ENCODE measurements at regions of chr3 and their contacts with region 1.

Region 1: DNA sequence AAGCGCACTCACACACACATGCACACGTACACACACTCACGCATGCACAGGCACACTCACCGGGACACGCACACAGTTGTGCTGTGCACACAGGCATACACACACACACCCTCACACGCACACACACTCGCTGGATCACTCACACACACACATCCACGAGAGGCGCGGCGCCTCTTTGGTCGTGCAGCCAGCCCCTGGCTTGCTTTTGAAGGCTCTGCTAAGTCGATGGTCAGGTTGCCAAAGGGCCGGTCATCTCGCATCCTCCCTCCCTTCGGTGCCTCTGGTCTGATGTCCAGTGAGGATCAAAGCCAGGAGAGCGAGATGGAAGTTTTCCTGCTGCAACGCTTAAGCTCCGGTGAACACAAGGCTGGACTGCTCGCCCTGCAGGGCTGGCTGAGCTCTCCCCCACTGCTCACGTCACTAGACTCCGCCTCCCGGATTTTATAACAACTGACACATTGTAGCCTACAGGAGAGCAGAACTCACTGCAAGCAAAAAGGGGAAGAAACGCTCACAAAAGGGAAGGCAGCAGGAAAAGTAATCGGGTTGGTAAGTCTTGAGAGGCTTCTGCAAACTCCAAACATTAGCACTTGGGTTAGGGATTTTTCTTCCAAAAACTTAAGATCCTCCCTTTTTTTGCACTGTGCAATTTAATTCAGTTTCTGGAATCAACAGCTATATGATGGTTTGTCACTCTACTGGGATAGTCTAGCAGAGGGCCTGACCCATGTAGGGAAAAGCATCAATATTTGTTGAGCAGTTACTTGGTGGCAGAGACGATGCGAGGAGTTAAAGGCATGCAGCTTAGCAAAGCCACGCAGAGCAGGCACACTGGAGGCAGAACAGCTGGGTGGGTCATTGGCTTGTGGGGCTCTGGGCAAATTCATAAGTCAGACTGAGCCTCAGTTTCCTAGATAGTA is at the start of gene SRGAP3:
- DNase-seq: peak; percentile 92
- H3K4me3 ChIP-seq: peak within 1 kb of the TSS; percentile 58 to 94 (median 89)
- H3K27ac ChIP-seq: peak within 1 kb of the TSS; percentile 84
- H3K4me1 ChIP-seq: peaks cover 55% of the 10 kb centered on the region
- H3K27me3 ChIP-seq: no peaks in the 10 kb centered on the region
- CTCF ChIP-seq: peak; percentile 22 to 47
- total RNA-seq, gene SRGAP3: 27.2 to 50.1 TPM

Region 2: DNA sequence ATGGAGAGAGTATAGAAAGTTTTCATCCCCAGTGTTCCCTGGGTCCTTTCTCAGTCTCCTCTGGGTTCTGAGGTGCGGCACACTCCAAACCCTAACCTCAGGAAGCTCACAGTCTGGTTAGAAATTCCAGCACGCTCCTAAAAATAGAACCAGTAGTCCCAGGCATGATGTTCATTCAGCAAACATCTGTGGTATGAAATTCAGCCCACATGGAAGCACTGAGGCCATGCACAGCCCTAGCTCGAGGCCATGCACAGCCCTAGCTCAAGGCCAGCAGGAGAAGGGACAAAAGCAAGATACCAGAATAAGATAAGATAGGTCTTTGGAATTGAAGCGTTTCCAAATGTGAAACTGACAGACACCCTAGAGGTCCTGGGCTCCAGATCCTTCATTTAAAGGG is 397.8 kb before region 1 on chr3:
- CTCF ChIA-PET with region 1: no interaction called
- dilution Hi-C with region 1: no loop called
- in situ Hi-C with region 1: no loop called
- intact Hi-C with region 1: no loop called
- DNase-seq: peak; percentile 61
- H3K4me3 ChIP-seq: no peak overlapping the region
- H3K27ac ChIP-seq: no peak overlapping the region
- H3K4me1 ChIP-seq: peaks cover 19% of the 10 kb centered on the region
- H3K27me3 ChIP-seq: no peaks in the 10 kb centered on the region
- CTCF ChIP-seq: no peak

Region 3: DNA sequence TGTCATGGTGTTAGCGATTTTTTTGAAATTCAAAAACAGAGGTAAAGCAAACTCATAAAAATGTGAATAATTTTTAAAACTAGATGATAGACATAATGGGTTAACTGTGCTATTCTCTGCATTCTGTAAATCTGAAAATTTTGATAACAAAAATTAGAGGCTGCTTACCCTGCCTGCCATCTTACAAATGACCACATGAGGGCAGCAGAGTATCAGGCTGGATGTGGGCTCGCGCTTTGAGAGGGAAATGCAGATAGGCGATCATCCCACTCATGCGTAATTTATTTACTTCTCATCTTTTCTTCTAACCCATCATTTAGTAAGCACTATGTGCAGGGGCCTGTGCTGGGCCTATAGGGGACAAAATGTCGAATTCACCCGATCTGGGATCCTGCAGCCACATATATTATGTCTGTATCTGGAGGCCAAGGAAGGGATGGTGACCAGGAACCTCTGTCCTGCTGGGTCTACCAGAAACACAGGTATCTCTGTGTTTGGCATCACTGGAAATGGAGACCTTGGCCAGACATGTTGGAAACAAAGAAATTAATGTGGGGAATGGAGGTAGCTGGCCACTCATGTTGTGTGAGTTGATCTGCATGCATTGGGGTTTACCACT is 278.5 kb before region 1 on chr3:
- CTCF ChIA-PET with region 1: no interaction called
- dilution Hi-C with region 1: no loop called
- in situ Hi-C with region 1: no loop called
- intact Hi-C with region 1: loop called (anchors 5 kb)
- DNase-seq: peak; percentile 48
- H3K4me3 ChIP-seq: no peak overlapping the region
- H3K27ac ChIP-seq: no peak overlapping the region
- H3K4me1 ChIP-seq: no peaks in the 10 kb centered on the region
- H3K27me3 ChIP-seq: no peaks in the 10 kb centered on the region
- CTCF ChIP-seq: peak; percentile 98 to 99

Region 4: GRCh38 chr3:9033867-9034266 is 215.7 kb before region 1 on chr3:
- CTCF ChIA-PET with region 1: no interaction called
- dilution Hi-C with region 1: no loop called
- in situ Hi-C with region 1: no loop called
- intact Hi-C with region 1: loop called (anchors 1 kb)
- DNase-seq: no peak
- H3K4me3 ChIP-seq: no peak overlapping the region
- H3K27ac ChIP-seq: no peak overlapping the region
- H3K4me1 ChIP-seq: no peaks in the 10 kb centered on the region
- H3K27me3 ChIP-seq: no peaks in the 10 kb centered on the region
- CTCF ChIP-seq: no peak

Region 5: GRCh38 chr3:9168241-9168741 is 81.2 kb before region 1 on chr3:
- CTCF ChIA-PET with region 1: no interaction called
- dilution Hi-C with region 1: no loop called
- in situ Hi-C with region 1: no loop called
- intact Hi-C with region 1: loop called (anchors 1 kb)
- DNase-seq: peak; percentile 70
- H3K4me3 ChIP-seq: no peak overlapping the region
- H3K27ac ChIP-seq: peak overlapping the region; percentile 96
- H3K4me1 ChIP-seq: peaks cover 56% of the 10 kb centered on the region
- H3K27me3 ChIP-seq: no peaks in the 10 kb centered on the region
- CTCF ChIP-seq: no peak

Region 6: GRCh38 chr3:9214599-9214998 is 34.9 kb before region 1 on chr3:
- CTCF ChIA-PET with region 1: no interaction called
- dilution Hi-C with region 1: no loop called
- in situ Hi-C with region 1: no loop called
- intact Hi-C with region 1: loop called (anchors 2 kb)
- DNase-seq: peak; percentile 83
- H3K4me3 ChIP-seq: no peak overlapping the region
- H3K27ac ChIP-seq: peak overlapping the region; percentile 87
- H3K4me1 ChIP-seq: peaks cover 30% of the 10 kb centered on the region
- H3K27me3 ChIP-seq: no peaks in the 10 kb centered on the region
- CTCF ChIP-seq: no peak

Region 7: GRCh38 chr3:10322352-10322710 is 1072.8 kb after region 1 on chr3:
- CTCF ChIA-PET with region 1: interaction called, 13 read pairs
- dilution Hi-C with region 1: no loop called
- in situ Hi-C with region 1: no loop called
- intact Hi-C with region 1: no loop called
- DNase-seq: peak; percentile 9
- H3K4me3 ChIP-seq: no peak overlapping the region
- H3K27ac ChIP-seq: no peak overlapping the region
- H3K4me1 ChIP-seq: peaks cover 9% of the 10 kb centered on the region
- H3K27me3 ChIP-seq: no peaks in the 10 kb centered on the region
- CTCF ChIP-seq: peak; percentile 46 to 52